ENCODE measurements at regions of chr10 and their contacts with region 1.

Region 1: DNA sequence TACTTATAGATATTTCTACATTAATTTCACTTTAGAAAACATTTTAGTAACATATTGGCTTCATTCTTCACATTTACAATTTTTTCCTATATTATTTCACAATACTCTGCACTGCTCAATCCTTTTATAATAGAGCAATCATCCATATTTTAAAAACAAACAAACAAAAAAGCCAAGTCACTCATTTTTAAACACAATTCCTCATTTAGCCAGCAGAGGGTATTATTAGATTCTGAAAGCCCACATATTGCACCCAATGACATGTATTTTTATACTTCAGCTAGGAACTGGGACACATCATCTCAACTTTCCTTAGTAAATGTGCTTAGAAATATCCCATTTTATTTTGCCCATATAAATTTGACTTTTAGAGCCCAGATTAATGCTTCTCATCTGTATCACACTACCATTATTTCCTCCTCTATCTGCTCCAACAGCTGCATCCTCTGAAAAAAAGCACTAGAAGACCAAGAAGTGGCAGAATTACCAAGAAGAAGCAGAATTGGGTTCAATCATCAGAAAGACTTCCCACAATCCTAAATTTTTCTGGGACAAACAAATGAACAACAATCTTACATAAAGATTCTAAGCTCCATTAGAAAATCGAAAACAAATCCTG is 29.5 kb downstream of the CTNNA3 start:
- DNase-seq: no peak
- ATAC-seq: peak; percentile 46
- H3K4me3 ChIP-seq: no peak overlapping the region
- H3K27ac ChIP-seq: no peak overlapping the region
- H3K4me1 ChIP-seq: no peaks in the 10 kb centered on the region
- H3K27me3 ChIP-seq: no peaks in the 10 kb centered on the region

Region 2: GRCh38 chr10:67779465-67780203 is 113.1 kb after region 1 on chr10:
- intact Hi-C with region 1: loop called (anchors 2 kb)
- DNase-seq: peak in 1 of 2 donors; percentile 63
- ATAC-seq: peak; percentile 91
- H3K4me3 ChIP-seq: peak overlapping the region in 1 of 2 donors; percentile 34
- H3K27ac ChIP-seq: no peak overlapping the region
- H3K4me1 ChIP-seq: no peaks in the 10 kb centered on the region
- H3K27me3 ChIP-seq: no peaks in the 10 kb centered on the region

Region 3: GRCh38 chr10:67861750-67862460 is 195.4 kb after region 1 on chr10:
- intact Hi-C with region 1: no loop called
- DNase-seq: no peak
- ATAC-seq: no peak
- H3K4me3 ChIP-seq: no peak overlapping the region
- H3K27ac ChIP-seq: no peak overlapping the region
- H3K4me1 ChIP-seq: no peaks in the 10 kb centered on the region
- H3K27me3 ChIP-seq: no peaks in the 10 kb centered on the region